Gastrocnemius medialis (tissue), 4 donors: ENCODE measurements at regions of chr3 and their contacts with region 1.

Region 1: DNA sequence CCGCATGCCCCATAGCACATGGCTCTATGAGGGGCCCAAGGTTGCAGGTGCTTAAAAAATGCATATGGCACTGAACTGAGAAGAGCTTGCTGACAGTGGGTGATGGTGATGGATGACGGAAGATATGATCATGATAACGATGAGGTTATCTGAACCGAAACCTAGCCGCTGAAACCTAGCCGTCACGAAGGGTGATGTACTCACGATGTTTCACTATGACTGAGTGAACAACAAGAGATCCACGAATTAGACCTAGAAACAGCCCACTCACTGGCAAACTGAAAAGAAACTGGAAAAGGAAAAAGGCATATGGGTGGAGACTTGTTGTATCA is 57.6 kb upstream of the BCL6 start:
- DNase-seq: no peak
- ATAC-seq: no peak
- H3K4me3 ChIP-seq: no peak overlapping the region
- H3K27ac ChIP-seq: no peak overlapping the region
- H3K4me1 ChIP-seq: no peaks in the 10 kb centered on the region
- H3K27me3 ChIP-seq: no peaks in the 10 kb centered on the region
- CTCF ChIP-seq: no peak
- POLR2A ChIP-seq: no peak

Region 2: DNA sequence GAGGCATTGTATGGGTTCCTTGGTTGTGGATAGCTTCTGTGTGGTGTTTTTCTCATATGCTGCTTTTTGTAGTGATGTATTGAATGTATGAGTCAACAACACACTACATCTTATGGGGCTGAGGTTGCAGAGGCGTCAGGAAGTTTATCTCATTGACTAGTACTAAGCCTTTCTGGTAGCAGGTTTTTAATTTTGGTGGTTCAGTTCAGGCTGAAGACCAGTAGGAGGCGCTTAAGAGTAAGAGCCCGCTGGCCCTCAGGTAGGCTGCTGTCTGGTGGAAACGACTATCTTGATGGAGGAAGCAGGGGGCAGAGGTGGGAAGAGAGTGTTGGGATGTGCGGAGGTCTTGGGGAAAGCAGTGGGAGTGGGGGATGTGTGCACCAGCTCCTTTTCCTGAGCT is 372.3 kb before region 1 on chr3:
- in situ Hi-C with region 1: no loop called
- intact Hi-C with region 1: loop called (anchors 10 kb)
- DNase-seq: no peak
- ATAC-seq: no peak
- H3K4me3 ChIP-seq: no peak overlapping the region
- H3K27ac ChIP-seq: no peak overlapping the region
- H3K4me1 ChIP-seq: no peaks in the 10 kb centered on the region
- H3K27me3 ChIP-seq: no peaks in the 10 kb centered on the region
- CTCF ChIP-seq: no peak
- POLR2A ChIP-seq: no peak

Region 3: DNA sequence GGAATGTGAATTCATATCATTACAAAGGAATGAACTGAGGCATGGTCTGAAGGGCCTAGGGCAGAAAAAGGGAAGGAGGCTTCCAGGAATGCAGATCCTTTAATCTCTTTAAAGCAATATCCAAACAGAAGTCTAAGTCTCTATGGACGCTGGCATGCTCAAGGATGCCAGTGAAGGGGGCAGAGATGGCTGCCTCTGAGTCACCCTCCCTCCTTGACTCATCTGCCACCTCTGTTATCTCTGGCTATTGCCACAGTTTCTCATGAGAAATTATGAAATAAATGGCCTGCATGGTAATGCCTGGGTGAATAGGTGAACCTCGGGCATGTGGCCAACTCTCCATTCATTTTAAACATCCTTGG is 38.7 kb after region 1 on chr3:
- in situ Hi-C with region 1: no loop called
- intact Hi-C with region 1: no loop called
- DNase-seq: no peak
- ATAC-seq: no peak
- H3K4me3 ChIP-seq: no peak overlapping the region
- H3K27ac ChIP-seq: no peak overlapping the region
- H3K4me1 ChIP-seq: peaks cover 0 to 7% of the 10 kb centered on the region in 2 donors
- H3K27me3 ChIP-seq: no peaks in the 10 kb centered on the region
- CTCF ChIP-seq: no peak
- POLR2A ChIP-seq: no peak